ENCODE measurements at regions of chr6 and their contacts with region 1.

Region 1: GRCh38 chr6:7615611-7616383 is 25.8 kb downstream of the SNRNP48 start:
- DNase-seq: peak; percentile 47
- H3K4me3 ChIP-seq: no peak overlapping the region
- H3K27ac ChIP-seq: no peak overlapping the region
- H3K4me1 ChIP-seq: peaks cover 7% of the 10 kb centered on the region
- H3K27me3 ChIP-seq: no peaks in the 10 kb centered on the region
- CTCF ChIP-seq: peak; percentile 74

Region 2: GRCh38 chr6:6556738-6557505 is 1058.9 kb before region 1 on chr6:
- CTCF ChIA-PET with region 1: no interaction called
- POLR2A ChIA-PET with region 1: no interaction called
- intact Hi-C with region 1: loop called (anchors 5 kb)
- DNase-seq: peak in 1 of 2 experiments; percentile 41
- H3K4me3 ChIP-seq: no peak overlapping the region
- H3K27ac ChIP-seq: no peak overlapping the region
- H3K4me1 ChIP-seq: no peaks in the 10 kb centered on the region
- H3K27me3 ChIP-seq: peaks cover 5% of the 10 kb centered on the region; the same call in 1 of the 2 replicates
- CTCF ChIP-seq: peak; percentile 72

Region 3: GRCh38 chr6:7276199-7276524 is 339.6 kb before region 1 on chr6:
- CTCF ChIA-PET with region 1: interaction called, 8 read pairs
- POLR2A ChIA-PET with region 1: no interaction called
- intact Hi-C with region 1: loop called (anchors 1 kb)
- DNase-seq: no peak
- H3K4me3 ChIP-seq: no peak overlapping the region
- H3K27ac ChIP-seq: no peak overlapping the region
- H3K4me1 ChIP-seq: no peaks in the 10 kb centered on the region
- H3K27me3 ChIP-seq: no peaks in the 10 kb centered on the region
- CTCF ChIP-seq: no peak; the same call in 1 of the 2 replicates

Region 4: DNA sequence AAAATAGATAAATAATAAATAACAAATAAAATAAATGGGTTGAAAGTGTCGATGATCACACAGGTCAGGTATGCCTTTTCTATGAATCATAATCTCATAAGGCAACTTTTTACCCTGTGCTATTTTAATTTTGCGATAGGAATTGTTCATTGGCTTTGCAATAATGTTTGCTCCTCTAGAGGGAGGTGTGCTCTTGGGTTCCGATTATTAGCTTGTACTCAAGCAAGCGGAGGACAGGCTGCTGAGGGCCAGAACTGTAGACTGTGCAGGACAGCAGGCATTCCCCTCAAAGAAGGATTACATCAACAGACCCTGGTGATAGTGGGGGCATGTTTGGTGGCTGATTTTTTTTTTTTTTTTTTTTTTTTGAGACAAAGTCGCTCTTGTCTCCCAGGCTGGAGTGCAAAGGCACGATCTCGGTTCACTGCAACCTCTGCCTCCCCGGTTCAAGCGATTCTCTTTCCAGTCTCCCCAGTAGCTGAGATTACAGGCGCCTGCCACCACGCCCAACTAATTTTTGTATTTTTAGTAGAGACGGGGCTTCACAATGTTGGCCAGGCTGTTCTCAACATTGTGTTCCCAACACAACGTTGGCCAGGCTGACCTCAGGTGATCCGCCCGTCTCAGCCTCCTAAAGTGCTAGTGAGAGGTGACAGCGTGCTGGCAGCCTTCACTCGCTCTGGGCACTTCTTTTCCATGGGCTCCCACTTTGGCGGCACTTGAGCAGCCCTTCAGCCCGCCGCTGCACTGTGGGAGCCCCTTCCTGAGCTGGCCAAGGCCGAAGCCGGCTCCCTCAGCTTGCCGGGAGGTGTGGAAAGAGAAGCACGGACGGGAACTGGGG is 190.6 kb before region 1 on chr6:
- CTCF ChIA-PET with region 1: no interaction called
- POLR2A ChIA-PET with region 1: no interaction called
- intact Hi-C with region 1: loop called (anchors 1 kb)
- DNase-seq: peak; percentile 32 to 57
- H3K4me3 ChIP-seq: no peak overlapping the region
- H3K27ac ChIP-seq: no peak overlapping the region
- H3K4me1 ChIP-seq: no peaks in the 10 kb centered on the region
- H3K27me3 ChIP-seq: no peaks in the 10 kb centered on the region
- CTCF ChIP-seq: peak; percentile 61

Region 5: GRCh38 chr6:7992002-7992815 is 376.4 kb after region 1 on chr6:
- CTCF ChIA-PET with region 1: no interaction called
- POLR2A ChIA-PET with region 1: no interaction called
- intact Hi-C with region 1: loop called (anchors 5 kb)
- DNase-seq: peak in 1 of 2 experiments; percentile 51
- H3K4me3 ChIP-seq: no peak overlapping the region
- H3K27ac ChIP-seq: no peak overlapping the region
- H3K4me1 ChIP-seq: no peaks in the 10 kb centered on the region
- H3K27me3 ChIP-seq: no peaks in the 10 kb centered on the region
- CTCF ChIP-seq: peak; percentile 63

Measured in PC-9 (cell line).